OCI-LY7 (cell line): ENCODE measurements at regions of chr10 and their contacts with region 1.

Region 1: GRCh38 chr10:13225601-13226000 is 8.6 kb downstream of the UCMA start:
- DNase-seq: no peak
- H3K4me3 ChIP-seq: no peak overlapping the region
- H3K27ac ChIP-seq: no peak overlapping the region
- H3K4me1 ChIP-seq: no peaks in the 10 kb centered on the region
- CTCF ChIP-seq: no peak

Region 2: GRCh38 chr10:13271552-13272163 is 46.1 kb after region 1 on chr10:
- CTCF ChIA-PET with region 1: no interaction called
- POLR2A ChIA-PET with region 1: interaction called, 11 read pairs
- intact Hi-C with region 1: no loop called
- DNase-seq: peak; percentile 78
- H3K4me3 ChIP-seq: peak overlapping the region; percentile 41
- H3K27ac ChIP-seq: peak overlapping the region; percentile 97
- H3K4me1 ChIP-seq: peaks cover 50% of the 10 kb centered on the region
- CTCF ChIP-seq: peak; percentile 81

Region 3: DNA sequence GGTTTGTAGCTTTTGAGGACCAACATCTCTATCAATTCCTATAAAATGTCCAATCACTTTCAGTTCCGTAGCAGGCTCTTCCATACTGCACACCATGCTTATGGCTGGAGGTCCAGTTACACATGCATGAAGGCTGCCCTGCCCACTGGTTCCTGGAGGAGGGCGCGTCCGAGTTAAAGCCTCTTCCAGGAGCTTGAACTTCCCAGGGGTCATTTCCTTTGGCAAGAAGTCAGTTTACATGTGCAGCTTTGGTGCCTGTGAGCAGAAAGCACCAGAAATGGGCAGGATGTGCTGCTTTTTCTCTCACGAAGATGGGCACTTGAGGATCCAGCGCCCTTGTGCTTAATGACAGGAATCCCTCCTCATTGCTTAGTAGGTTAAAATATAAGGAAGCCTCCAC is 91.9 kb after region 1 on chr10:
- CTCF ChIA-PET with region 1: no interaction called
- POLR2A ChIA-PET with region 1: no interaction called
- intact Hi-C with region 1: no loop called
- DNase-seq: no peak
- H3K4me3 ChIP-seq: no peak overlapping the region
- H3K27ac ChIP-seq: no peak overlapping the region
- H3K4me1 ChIP-seq: no peaks in the 10 kb centered on the region
- CTCF ChIP-seq: no peak